IMR-90 (cell line): ENCODE measurements at regions of chr17 and their contacts with region 1.

Region 1: GRCh38 chr17:39429600-39429999 is 21.5 kb downstream of the MED1 start:
- DNase-seq: no peak
- ATAC-seq: no peak
- H3K4me3 ChIP-seq: no peak overlapping the region
- H3K27ac ChIP-seq: no peak overlapping the region
- H3K4me1 ChIP-seq: no peaks in the 10 kb centered on the region
- H3K27me3 ChIP-seq: no peaks in the 10 kb centered on the region
- CTCF ChIP-seq: no peak
- POLR2A ChIP-seq: no peak
- RAD21 ChIP-seq: no peak

Region 2: GRCh38 chr17:39410279-39410678 is 19.3 kb before region 1 on chr17:
- CTCF ChIA-PET with region 1: no interaction called
- POLR2A ChIA-PET with region 1: interaction called, 12 read pairs
- dilution Hi-C with region 1: no loop called
- in situ Hi-C with region 1: no loop called
- intact Hi-C with region 1: no loop called
- DNase-seq: no peak
- ATAC-seq: no peak
- H3K4me3 ChIP-seq: no peak overlapping the region
- H3K27ac ChIP-seq: no peak overlapping the region
- H3K4me1 ChIP-seq: no peaks in the 10 kb centered on the region
- H3K27me3 ChIP-seq: no peaks in the 10 kb centered on the region
- CTCF ChIP-seq: no peak
- POLR2A ChIP-seq: no peak
- RAD21 ChIP-seq: no peak

Region 3: DNA sequence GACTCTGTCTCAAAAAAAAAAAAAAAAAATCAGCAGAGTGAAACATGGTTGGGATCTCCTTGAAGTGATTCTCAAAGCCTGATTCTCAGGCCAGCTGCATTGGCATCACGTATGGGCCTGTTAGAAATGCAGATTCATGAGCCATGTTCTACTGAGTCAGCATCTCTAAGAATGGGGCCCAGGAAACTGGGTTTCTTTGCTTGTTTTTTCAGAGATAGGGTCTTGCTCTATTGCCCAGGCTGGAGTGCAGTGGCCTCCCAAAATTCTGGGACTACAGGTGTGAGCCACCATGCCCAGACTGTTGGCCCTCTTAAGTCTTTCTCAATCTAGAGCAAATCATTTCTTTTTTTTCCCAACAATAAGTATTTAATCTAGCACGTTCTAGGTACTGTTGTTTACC is 79.4 kb after region 1 on chr17:
- CTCF ChIA-PET with region 1: no interaction called
- POLR2A ChIA-PET with region 1: no interaction called
- dilution Hi-C with region 1: no loop called
- in situ Hi-C with region 1: no loop called
- intact Hi-C with region 1: loop called (anchors 5 kb)
- DNase-seq: no peak
- ATAC-seq: no peak
- H3K4me3 ChIP-seq: no peak overlapping the region
- H3K27ac ChIP-seq: no peak overlapping the region
- H3K4me1 ChIP-seq: no peaks in the 10 kb centered on the region
- H3K27me3 ChIP-seq: no peaks in the 10 kb centered on the region
- CTCF ChIP-seq: no peak
- POLR2A ChIP-seq: no peak
- RAD21 ChIP-seq: no peak